ENCODE measurements at regions of chr19 and their contacts with region 1.

Region 1: GRCh38 chr19:17496337-17496997 is 15.0 kb upstream of the PGLS start:
- DNase-seq: peak; percentile 90
- ATAC-seq: peak; percentile 85
- H3K4me3 Mint-ChIP-seq: peak overlapping the region; percentile 74
- H3K27ac Mint-ChIP-seq: no peak overlapping the region
- H3K4me1 Mint-ChIP-seq: peaks cover 16% of the 10 kb centered on the region
- H3K27me3 Mint-ChIP-seq: peaks cover 23% of the 10 kb centered on the region
- CTCF ChIP-seq: peak; percentile 92

Region 2: GRCh38 chr19:17376935-17377600 is 119.4 kb before region 1 on chr19 and contains the start of gene PLVAP:
- CTCF ChIA-PET with region 1: no interaction called
- POLR2A ChIA-PET with region 1: no interaction called
- DNase-seq: no peak
- ATAC-seq: peak; percentile 33; the same call in 1 of the 2 replicates
- H3K4me3 Mint-ChIP-seq: no peak within 1 kb of the TSS
- H3K27ac Mint-ChIP-seq: no peak within 1 kb of the TSS
- H3K4me1 Mint-ChIP-seq: peaks cover 12% of the 10 kb centered on the region
- H3K27me3 Mint-ChIP-seq: no peaks in the 10 kb centered on the region
- CTCF ChIP-seq: no peak
- total RNA-seq, gene PLVAP: 0.11 to 0.27 TPM in 2 of 3 replicates, not detected in the other

Region 3: DNA sequence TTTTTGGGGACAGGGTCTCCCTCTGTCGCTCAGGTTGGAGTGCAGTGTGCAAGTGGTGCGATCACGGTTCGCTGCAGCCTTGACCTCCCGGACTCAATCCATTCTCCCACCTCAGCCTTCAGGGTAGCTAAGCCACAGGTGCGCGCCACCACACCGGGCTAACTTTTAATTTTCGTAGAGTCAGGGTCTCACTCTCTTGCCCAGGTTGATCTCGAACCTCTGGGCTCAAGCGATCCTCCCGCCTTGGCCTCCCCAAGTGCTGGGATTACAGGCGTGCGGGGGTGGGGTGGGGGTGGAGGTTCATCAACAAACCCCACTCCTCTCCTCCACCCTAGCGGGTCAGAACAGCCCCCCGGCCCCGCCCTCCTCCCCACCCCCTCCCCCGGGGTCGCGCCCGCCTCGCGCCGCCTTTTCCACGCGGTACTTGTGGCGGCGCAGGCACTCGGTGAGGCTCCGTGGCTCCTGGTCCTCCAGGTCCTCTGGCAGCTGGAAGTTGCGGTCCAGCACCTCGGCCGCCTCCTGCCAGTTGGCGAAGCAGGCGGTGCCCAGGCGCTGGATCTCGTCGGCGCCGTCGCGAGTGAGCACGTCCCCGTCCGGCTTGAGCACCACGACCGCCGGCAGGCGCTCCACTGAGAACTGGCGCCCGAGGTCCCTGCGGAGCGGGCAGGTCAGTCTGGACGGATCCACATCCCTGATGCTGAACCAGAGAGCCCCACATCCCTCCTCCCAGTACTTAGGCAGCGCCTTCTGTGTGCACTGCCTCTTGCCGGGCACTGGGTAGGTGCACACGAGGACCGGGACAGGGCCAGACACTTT is 41.0 kb before region 1 on chr19:
- CTCF ChIA-PET with region 1: interaction called, 14 read pairs
- POLR2A ChIA-PET with region 1: no interaction called
- DNase-seq: peak; percentile 46
- ATAC-seq: peak; percentile 38
- H3K4me3 Mint-ChIP-seq: peak overlapping the region; percentile 59
- H3K27ac Mint-ChIP-seq: no peak overlapping the region
- H3K4me1 Mint-ChIP-seq: peaks cover 14% of the 10 kb centered on the region
- H3K27me3 Mint-ChIP-seq: peaks cover 62% of the 10 kb centered on the region
- CTCF ChIP-seq: no peak

Region 4: GRCh38 chr19:17511724-17512573 is 15.5 kb after region 1 on chr19:
- CTCF ChIA-PET with region 1: interaction called, 84 read pairs
- POLR2A ChIA-PET with region 1: interaction called, 4 read pairs
- DNase-seq: peak; percentile 87
- ATAC-seq: peak; percentile 73
- H3K4me3 Mint-ChIP-seq: peak overlapping the region; percentile 98
- H3K27ac Mint-ChIP-seq: peak overlapping the region; percentile 95
- H3K4me1 Mint-ChIP-seq: peaks cover 16% of the 10 kb centered on the region
- H3K27me3 Mint-ChIP-seq: no peaks in the 10 kb centered on the region
- CTCF ChIP-seq: no peak

Region 5: GRCh38 chr19:17555480-17555928 is 59.0 kb after region 1 on chr19 and contains the start of gene COLGALT1:
- CTCF ChIA-PET with region 1: interaction called, 15 read pairs
- POLR2A ChIA-PET with region 1: no interaction called
- DNase-seq: peak; percentile 99
- ATAC-seq: peak; percentile 96
- H3K4me3 Mint-ChIP-seq: peak within 1 kb of the TSS; percentile 69
- H3K27ac Mint-ChIP-seq: no peak within 1 kb of the TSS
- H3K4me1 Mint-ChIP-seq: peaks cover 17% of the 10 kb centered on the region
- H3K27me3 Mint-ChIP-seq: no peaks in the 10 kb centered on the region; the same call in 1 of the 2 replicates
- CTCF ChIP-seq: no peak
- total RNA-seq, gene COLGALT1: 54.0 to 71.7 TPM (median 67.1 TPM) in 3 replicates

Region 6: GRCh38 chr19:17658666-17659065 is 162.2 kb after region 1 on chr19:
- CTCF ChIA-PET with region 1: no interaction called
- POLR2A ChIA-PET with region 1: no interaction called
- DNase-seq: no peak
- ATAC-seq: no peak
- H3K4me3 Mint-ChIP-seq: no peak overlapping the region
- H3K27ac Mint-ChIP-seq: no peak overlapping the region
- H3K4me1 Mint-ChIP-seq: peaks cover 8% of the 10 kb centered on the region
- H3K27me3 Mint-ChIP-seq: no peaks in the 10 kb centered on the region; the same call in 1 of the 2 replicates
- CTCF ChIP-seq: no peak